Calu3 (cell line): ENCODE measurements at regions of chr5 and their contacts with region 1.

Region 1: DNA sequence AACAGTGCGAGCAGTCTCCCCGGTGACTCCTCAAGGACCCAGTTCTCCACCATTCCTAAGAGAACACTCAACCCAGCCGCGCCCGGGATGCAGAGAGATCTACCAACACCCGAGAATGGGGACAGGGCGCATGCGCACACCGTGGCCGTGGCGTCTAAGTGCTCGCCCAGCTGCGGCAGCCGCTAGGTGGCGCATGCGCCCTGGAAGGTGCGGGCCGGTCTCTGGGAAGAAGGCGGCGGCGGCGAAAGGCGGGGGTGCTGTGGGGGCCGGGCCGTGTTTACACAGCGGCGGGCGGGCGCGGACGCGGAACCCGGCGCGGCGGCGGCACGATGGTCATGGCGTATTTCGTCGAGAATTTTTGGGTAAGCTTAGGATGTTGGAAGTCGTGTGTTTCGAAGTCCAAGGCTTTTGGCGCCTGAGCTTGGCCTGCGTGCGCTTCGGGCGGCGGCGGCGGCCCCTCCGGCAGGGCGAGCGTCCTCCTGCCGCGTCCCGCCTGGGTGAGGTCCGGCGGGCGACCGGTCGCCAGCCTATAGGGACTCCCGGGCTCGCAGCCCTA is at the start of gene FCHO2:
- DNase-seq: peak; percentile 100
- H3K4me3 Mint-ChIP-seq: peak within 1 kb of the TSS; percentile 93
- H3K27ac Mint-ChIP-seq: peak within 1 kb of the TSS; percentile 94
- H3K4me1 Mint-ChIP-seq: peaks cover 46% of the 10 kb centered on the region
- H3K27me3 Mint-ChIP-seq: no peaks in the 10 kb centered on the region
- CTCF ChIP-seq: peak; percentile 88
- total RNA-seq, gene FCHO2: 36.5 and 40.9 TPM in 2 replicates

Region 2: DNA sequence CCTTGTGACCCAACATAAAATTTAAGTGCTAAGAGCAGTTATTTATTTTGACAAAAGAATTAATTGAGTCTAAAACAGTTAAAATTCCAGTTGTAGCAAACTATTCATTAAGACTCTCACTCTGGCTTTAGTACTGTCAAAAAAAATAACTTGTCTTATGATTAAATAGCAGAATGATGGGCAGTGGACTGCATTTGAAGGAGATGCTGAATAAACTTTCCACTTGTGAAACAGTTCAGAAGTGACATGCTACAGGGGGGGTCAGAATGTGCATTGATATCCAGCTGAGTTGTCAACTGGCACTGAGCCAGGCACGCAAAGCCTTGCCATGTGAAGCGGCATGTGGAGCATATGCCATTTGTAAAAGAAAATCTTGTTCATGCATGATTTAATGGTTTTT is 76.0 kb after region 1 on chr5:
- CTCF ChIA-PET with region 1: interaction called, 4 read pairs
- intact Hi-C with region 1: loop called (anchors 1 kb)
- DNase-seq: peak; percentile 81
- H3K4me3 Mint-ChIP-seq: peak overlapping the region; percentile 20
- H3K27ac Mint-ChIP-seq: peak overlapping the region; percentile 47
- H3K4me1 Mint-ChIP-seq: peaks cover 40% of the 10 kb centered on the region
- H3K27me3 Mint-ChIP-seq: no peaks in the 10 kb centered on the region
- CTCF ChIP-seq: no peak

Region 3: DNA sequence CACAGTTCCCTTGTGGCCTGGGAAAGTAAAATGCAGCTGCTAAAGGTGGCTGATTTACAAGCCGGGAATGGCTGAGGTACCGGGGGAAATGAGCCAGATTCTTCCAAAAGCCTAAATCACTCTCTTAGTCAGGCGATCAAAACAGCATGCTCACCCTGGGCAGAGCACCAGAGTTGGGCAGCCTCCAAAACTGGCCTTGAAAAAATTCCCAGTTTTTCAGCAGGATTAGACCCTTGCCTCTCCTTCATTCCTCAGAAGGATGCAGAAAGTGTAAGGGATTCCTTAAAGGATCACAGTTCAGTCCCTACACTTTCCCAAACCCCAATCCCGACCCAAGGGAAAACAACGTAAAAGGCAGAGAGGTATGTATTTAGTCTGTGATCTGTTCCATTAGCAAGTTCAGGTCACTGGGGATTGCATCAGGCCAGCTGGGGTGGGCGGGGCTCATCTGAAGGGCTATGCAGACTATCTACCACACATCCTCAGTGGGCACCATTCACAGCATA is 234.1 kb after region 1 on chr5:
- CTCF ChIA-PET with region 1: interaction called, 12 read pairs
- intact Hi-C with region 1: no loop called
- DNase-seq: no peak
- H3K4me3 Mint-ChIP-seq: no peak overlapping the region
- H3K27ac Mint-ChIP-seq: no peak overlapping the region
- H3K4me1 Mint-ChIP-seq: peaks cover 14% of the 10 kb centered on the region
- H3K27me3 Mint-ChIP-seq: no peaks in the 10 kb centered on the region
- CTCF ChIP-seq: no peak